ENCODE measurements at regions of chr12 and their contacts with region 1.

Region 1: GRCh38 chr12:93006471-93007208 is 77.5 kb upstream of the EEA1 start:
- DNase-seq: no peak
- H3K4me3 ChIP-seq: no peak overlapping the region
- H3K27me3 ChIP-seq: no peaks in the 10 kb centered on the region
- CTCF ChIP-seq: no peak

Region 2: DNA sequence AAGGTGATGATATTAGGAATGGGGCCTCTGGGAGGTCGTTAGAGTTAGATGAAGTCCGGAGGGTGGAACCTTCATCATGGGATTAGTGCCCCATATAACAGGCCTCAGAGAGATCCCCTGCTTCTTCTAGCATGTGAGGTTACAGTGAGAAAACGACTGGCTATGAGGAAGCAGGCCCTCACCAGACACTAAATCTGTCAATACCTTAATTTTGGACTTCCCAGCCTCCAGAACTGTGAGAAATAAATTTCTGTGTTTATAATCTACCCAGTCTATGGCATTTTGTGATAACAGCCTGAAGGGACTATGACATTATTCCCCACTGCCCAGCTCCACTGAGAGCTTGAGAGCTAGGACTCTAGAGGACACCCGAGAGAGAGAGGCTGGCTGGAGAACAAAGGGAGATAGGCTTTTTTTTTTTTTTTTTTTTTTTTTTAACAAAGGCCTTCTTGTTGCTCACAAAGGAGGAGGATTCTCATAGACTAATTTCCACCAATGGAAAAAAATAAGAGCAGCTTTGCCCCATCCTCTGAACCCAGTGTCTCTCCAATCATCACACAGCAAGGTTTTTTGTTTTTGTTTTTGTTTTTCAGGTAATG is 10.2 kb after region 1 on chr12:
- CTCF ChIA-PET with region 1: interaction called, 6 read pairs
- POLR2A ChIA-PET with region 1: interaction called, 17 read pairs
- DNase-seq: no peak
- H3K4me3 ChIP-seq: no peak overlapping the region
- H3K27me3 ChIP-seq: no peaks in the 10 kb centered on the region
- CTCF ChIP-seq: no peak

Measured in BJ (cell line).